B cell (primary cell): ENCODE measurements at regions of chr6 and their contacts with region 1.

Region 1: GRCh38 chr6:13454286-13455221 is 32.8 kb downstream of the GFOD1 start:
- DNase-seq: peak; percentile 75
- ATAC-seq: peak; percentile 77
- H3K4me3 ChIP-seq: peak overlapping the region in 3 of 5 experiments; percentile 7 to 26 (median 12)
- H3K4me3 Mint-ChIP-seq: peak overlapping the region; percentile 76
- H3K27ac ChIP-seq: peak overlapping the region; percentile 23 to 50
- H3K27ac Mint-ChIP-seq: peak overlapping the region; percentile 88
- H3K4me1 ChIP-seq: peaks cover 36 to 41% of the 10 kb centered on the region in 2 donors
- H3K4me1 Mint-ChIP-seq: peaks cover 56% of the 10 kb centered on the region
- H3K27me3 ChIP-seq: no peaks in the 10 kb centered on the region
- H3K27me3 Mint-ChIP-seq: no peaks in the 10 kb centered on the region
- CTCF ChIP-seq: peak; percentile 17

Region 2: GRCh38 chr6:13395272-13396237 is 59.0 kb before region 1 on chr6:
- CTCF ChIA-PET with region 1: interaction called, 4 read pairs
- POLR2A ChIA-PET with region 1: no interaction called
- intact Hi-C with region 1: loop called (anchors 2 kb)
- DNase-seq: peak; percentile 73
- ATAC-seq: peak; percentile 59
- H3K4me3 ChIP-seq: peak overlapping the region in 1 of 5 experiments; percentile 2
- H3K4me3 Mint-ChIP-seq: peak overlapping the region; percentile 47
- H3K27ac ChIP-seq: peak overlapping the region; percentile 79 to 83
- H3K27ac Mint-ChIP-seq: peak overlapping the region; percentile 91
- H3K4me1 ChIP-seq: peaks cover 36 to 52% of the 10 kb centered on the region in 2 donors
- H3K4me1 Mint-ChIP-seq: peaks cover 52% of the 10 kb centered on the region
- H3K27me3 ChIP-seq: no peaks in the 10 kb centered on the region
- H3K27me3 Mint-ChIP-seq: no peaks in the 10 kb centered on the region
- CTCF ChIP-seq: no peak

Region 3: DNA sequence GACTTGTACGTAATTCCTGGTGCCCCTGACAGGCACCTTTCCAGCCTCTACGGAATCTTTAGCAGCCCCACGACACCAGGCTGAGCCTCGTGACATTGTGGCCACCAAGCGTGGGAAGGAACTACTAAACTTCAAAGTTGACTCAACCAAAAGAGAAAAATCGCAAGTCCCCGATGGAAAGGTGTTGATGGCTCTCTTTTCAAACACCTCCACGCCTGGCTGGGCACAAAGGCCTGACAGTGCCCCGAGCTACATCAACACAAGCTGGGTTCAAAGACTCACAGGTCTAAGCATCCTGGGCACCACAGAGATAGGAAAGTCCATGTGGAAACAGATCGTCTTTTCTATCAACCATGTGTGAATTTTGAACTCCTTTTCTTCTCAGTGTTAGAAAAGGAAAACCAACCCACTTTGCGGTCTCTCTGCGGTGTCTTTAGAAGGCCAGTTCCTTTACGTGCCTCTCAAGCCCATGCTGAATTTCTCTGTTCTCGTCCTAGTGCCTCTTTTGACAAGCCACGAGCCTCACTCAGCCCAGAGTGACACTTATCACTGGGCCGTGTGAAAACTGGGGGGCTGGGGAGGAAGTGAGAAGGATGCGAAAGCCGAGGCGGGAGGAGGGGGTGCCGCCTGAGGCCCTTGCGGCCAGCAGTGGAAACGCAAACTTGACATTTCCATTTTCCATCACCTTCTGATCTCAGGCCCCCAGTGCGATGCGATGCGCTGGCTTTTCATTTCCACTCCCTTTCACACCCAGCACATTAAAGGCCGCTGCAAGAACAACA is 26.6 kb before region 1 on chr6:
- CTCF ChIA-PET with region 1: interaction called, 7 read pairs
- POLR2A ChIA-PET with region 1: interaction called, 3 read pairs
- intact Hi-C with region 1: loop called (anchors 1 kb)
- DNase-seq: peak; percentile 91
- ATAC-seq: peak; percentile 85
- H3K4me3 ChIP-seq: peak overlapping the region in 4 of 5 experiments; percentile 7 to 46 (median 26)
- H3K4me3 Mint-ChIP-seq: peak overlapping the region; percentile 82
- H3K27ac ChIP-seq: peak overlapping the region; percentile 83 to 86
- H3K27ac Mint-ChIP-seq: peak overlapping the region; percentile 95
- H3K4me1 ChIP-seq: peaks cover 41 to 75% of the 10 kb centered on the region in 2 donors
- H3K4me1 Mint-ChIP-seq: peaks cover 67% of the 10 kb centered on the region
- H3K27me3 ChIP-seq: no peaks in the 10 kb centered on the region
- H3K27me3 Mint-ChIP-seq: no peaks in the 10 kb centered on the region
- CTCF ChIP-seq: peak; percentile 66

Region 4: GRCh38 chr6:13538084-13538483 is 83.5 kb after region 1 on chr6:
- CTCF ChIA-PET with region 1: interaction called, 34 read pairs
- POLR2A ChIA-PET with region 1: no interaction called
- intact Hi-C with region 1: loop called (anchors 1 kb)
- DNase-seq: peak; percentile 64
- ATAC-seq: peak; percentile 56
- H3K4me3 ChIP-seq: no peak overlapping the region
- H3K4me3 Mint-ChIP-seq: no peak overlapping the region
- H3K27ac ChIP-seq: no peak overlapping the region
- H3K27ac Mint-ChIP-seq: no peak overlapping the region
- H3K4me1 ChIP-seq: peaks cover 6 to 8% of the 10 kb centered on the region in 2 donors
- H3K4me1 Mint-ChIP-seq: peaks cover 17% of the 10 kb centered on the region
- H3K27me3 ChIP-seq: no peaks in the 10 kb centered on the region
- H3K27me3 Mint-ChIP-seq: no peaks in the 10 kb centered on the region
- CTCF ChIP-seq: peak; percentile 54

Region 5: DNA sequence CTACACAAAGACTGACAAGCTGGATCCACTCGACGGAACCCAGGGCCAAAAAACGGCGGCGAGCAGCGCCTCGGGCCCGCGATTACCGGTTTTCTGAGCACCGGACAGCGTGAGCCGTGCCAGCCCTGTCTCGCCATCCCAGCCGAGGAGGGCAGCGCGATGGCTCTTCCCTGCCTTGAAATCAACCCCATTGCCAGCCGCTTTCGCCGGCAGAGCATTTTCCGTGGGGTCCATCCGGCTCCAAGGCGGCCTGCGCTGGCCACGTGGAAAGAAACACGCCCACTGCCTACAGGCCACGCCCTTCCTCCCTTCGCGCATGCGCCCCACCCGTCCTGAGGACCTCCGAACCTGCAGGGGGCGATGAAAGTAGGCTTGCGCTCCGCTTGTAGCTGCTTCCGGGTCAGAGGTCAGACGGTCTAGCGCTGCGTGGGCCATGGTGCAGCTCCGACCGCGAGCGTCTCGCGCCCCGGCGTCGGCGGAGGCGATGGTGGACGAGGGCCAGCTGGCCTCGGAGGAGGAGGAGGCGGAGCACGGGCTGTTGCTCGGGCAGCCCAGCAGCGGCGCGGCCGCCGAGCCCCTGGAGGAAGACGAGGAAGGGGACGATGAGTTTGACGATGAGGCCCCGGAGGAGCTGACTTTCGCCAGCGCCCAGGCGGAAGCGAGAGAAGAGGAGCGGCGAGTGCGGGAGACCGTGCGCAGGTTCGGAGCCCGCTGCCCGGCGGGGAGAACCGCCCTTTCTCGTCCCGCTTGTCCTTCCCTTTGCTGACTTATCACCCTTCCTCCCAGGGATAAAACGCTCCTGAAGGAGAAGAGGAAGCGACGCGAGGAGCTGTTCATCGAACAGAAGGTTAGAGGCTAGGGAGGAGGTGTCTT is 160.6 kb after region 1 on chr6 and contains the start of gene NOL7:
- CTCF ChIA-PET with region 1: interaction called, 9 read pairs
- POLR2A ChIA-PET with region 1: interaction called, 3 read pairs
- intact Hi-C with region 1: loop called (anchors 10 kb)
- DNase-seq: peak; percentile 99
- ATAC-seq: peak; percentile 93
- H3K4me3 ChIP-seq: peak within 1 kb of the TSS; percentile 79 to 94 (median 93)
- H3K4me3 Mint-ChIP-seq: peak within 1 kb of the TSS; percentile 97
- H3K27ac ChIP-seq: peak within 1 kb of the TSS; percentile 73 to 82
- H3K27ac Mint-ChIP-seq: peak within 1 kb of the TSS; percentile 97
- H3K4me1 ChIP-seq: peaks cover 16 to 22% of the 10 kb centered on the region in 2 donors
- H3K4me1 Mint-ChIP-seq: peaks cover 46% of the 10 kb centered on the region
- H3K27me3 ChIP-seq: no peaks in the 10 kb centered on the region
- H3K27me3 Mint-ChIP-seq: no peaks in the 10 kb centered on the region
- CTCF ChIP-seq: peak; percentile 86
- total RNA-seq, gene NOL7: 48.6 and 58.3 TPM in 2 replicates

Region 6: DNA sequence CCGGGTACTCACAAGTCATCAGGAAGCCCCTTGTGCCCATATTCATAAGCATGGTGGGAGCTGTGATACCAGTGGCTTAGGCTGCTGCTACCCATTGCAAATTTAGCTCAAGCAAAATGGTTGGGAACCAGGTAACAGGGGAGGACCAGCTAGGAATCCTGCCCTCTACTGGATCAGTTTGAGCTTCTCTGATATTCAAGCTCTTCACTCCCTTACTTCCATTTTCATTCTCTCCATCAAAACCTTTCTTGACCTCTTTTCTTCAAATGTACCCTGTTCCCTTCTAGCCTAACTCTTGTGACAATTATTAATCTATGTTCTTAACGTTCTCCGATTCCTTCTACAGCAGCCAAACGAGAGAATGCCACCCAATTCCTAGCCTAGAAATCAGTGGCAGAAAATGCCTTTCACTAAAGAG is 170.3 kb after region 1 on chr6:
- CTCF ChIA-PET with region 1: interaction called, 18 read pairs
- POLR2A ChIA-PET with region 1: no interaction called
- intact Hi-C with region 1: no loop called
- DNase-seq: peak; percentile 57
- ATAC-seq: peak; percentile 51
- H3K4me3 ChIP-seq: no peak overlapping the region
- H3K4me3 Mint-ChIP-seq: no peak overlapping the region
- H3K27ac ChIP-seq: peak overlapping the region in 1 of 2 donors; percentile 42
- H3K27ac Mint-ChIP-seq: peak overlapping the region; percentile 77
- H3K4me1 ChIP-seq: no peaks in the 10 kb centered on the region
- H3K4me1 Mint-ChIP-seq: peaks cover 5% of the 10 kb centered on the region
- H3K27me3 ChIP-seq: no peaks in the 10 kb centered on the region
- H3K27me3 Mint-ChIP-seq: no peaks in the 10 kb centered on the region
- CTCF ChIP-seq: peak; percentile 40

Region 7: DNA sequence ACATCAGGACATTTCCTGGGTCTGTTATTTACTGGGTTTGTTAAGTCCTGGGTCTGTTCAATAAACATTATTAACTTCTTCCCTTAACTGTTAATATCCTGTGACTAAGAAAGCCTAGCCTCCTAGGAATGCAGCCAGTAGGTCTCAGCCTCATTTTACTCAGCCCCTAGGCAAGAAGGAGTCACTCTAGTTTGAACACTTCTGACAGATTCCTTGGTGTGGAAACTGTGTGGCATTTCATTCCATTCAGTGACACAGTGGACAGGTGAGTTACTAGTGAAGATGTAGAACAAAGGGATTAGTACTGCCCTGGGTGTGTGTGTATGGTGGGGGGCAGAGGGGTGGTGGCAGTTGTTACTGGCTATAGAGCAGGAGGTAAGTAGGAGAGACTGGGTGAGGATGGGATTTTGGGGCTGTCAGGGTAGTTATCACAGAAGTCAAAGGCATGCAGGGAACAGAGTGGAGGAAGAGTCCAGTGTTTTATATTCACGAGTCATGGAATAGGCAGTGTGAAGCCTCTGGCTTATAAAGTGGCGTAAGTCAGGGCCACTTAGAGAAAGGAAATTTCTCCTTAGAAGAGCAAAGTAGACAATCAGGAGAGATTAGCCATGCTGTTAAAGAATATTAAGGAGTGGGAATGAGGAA is 498.6 kb after region 1 on chr6:
- CTCF ChIA-PET with region 1: no interaction called
- POLR2A ChIA-PET with region 1: no interaction called
- intact Hi-C with region 1: no loop called
- DNase-seq: no peak
- ATAC-seq: no peak
- H3K4me3 ChIP-seq: no peak overlapping the region
- H3K4me3 Mint-ChIP-seq: no peak overlapping the region
- H3K27ac ChIP-seq: no peak overlapping the region
- H3K27ac Mint-ChIP-seq: no peak overlapping the region
- H3K4me1 ChIP-seq: no peaks in the 10 kb centered on the region
- H3K4me1 Mint-ChIP-seq: no peaks in the 10 kb centered on the region
- H3K27me3 ChIP-seq: no peaks in the 10 kb centered on the region
- H3K27me3 Mint-ChIP-seq: peaks cover 17% of the 10 kb centered on the region
- CTCF ChIP-seq: no peak